ENCODE measurements at regions of chr7 and their contacts with region 1.

Region 1: DNA sequence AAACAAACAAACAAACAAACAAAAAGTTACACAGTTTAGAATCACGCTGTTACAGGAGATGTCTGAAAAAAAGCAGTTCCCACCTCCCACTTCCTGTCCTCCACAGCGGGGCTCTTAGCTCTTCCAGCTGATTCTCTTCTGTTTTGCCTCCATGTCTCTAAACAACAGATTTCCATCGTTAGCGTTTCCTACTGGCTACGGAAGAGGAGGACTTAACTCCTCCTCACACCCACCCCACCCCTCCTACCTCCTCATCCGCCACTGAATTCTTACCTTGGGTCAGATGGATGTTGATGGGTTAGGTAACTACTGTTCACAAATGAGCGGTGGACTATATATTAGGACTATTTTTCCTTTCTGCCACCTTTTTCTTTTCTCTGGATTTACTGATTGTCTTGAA is 36.8 kb upstream of the NUB1 start:
- DNase-seq: no peak
- H3K4me3 ChIP-seq: no peak overlapping the region
- H3K27ac ChIP-seq: no peak overlapping the region
- H3K4me1 ChIP-seq: no peaks in the 10 kb centered on the region
- H3K27me3 ChIP-seq: peaks cover 0 to 3% of the 10 kb centered on the region in 2 donors
- CTCF ChIP-seq: no peak
- POLR2A ChIP-seq: no peak

Region 2: DNA sequence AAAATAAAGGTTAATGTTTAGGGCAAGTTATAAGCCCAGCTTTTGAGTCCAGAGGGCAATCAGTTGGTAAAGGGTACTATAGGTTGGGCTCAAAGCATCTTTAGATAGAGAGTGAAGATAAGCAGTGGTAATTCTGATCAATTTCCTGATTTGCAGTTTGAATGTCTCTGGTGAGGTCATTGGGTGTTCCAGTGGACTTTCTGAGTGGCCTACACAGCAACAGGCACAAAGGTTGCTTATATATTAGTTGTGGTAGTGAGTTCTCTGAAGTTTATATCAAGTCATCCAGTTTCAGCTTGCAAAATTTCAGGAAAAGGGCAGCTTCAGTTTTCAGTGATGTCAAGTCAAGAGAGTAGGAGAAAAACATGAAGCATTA is 538.5 kb before region 1 on chr7:
- intact Hi-C with region 1: no loop called
- DNase-seq: no peak
- H3K4me3 ChIP-seq: no peak overlapping the region
- H3K27ac ChIP-seq: no peak overlapping the region
- H3K4me1 ChIP-seq: no peaks in the 10 kb centered on the region
- H3K27me3 ChIP-seq: no peaks in the 10 kb centered on the region
- CTCF ChIP-seq: no peak
- POLR2A ChIP-seq: no peak

Region 3: GRCh38 chr7:151137076-151137675 is 167.7 kb before region 1 on chr7:
- intact Hi-C with region 1: loop called (anchors 10 kb)
- DNase-seq: peak in 1 of 2 donors; percentile 12
- H3K4me3 ChIP-seq: no peak overlapping the region
- H3K27ac ChIP-seq: no peak overlapping the region
- H3K4me1 ChIP-seq: no peaks in the 10 kb centered on the region
- H3K27me3 ChIP-seq: no peaks in the 10 kb centered on the region
- CTCF ChIP-seq: no peak
- POLR2A ChIP-seq: no peak

Region 4: DNA sequence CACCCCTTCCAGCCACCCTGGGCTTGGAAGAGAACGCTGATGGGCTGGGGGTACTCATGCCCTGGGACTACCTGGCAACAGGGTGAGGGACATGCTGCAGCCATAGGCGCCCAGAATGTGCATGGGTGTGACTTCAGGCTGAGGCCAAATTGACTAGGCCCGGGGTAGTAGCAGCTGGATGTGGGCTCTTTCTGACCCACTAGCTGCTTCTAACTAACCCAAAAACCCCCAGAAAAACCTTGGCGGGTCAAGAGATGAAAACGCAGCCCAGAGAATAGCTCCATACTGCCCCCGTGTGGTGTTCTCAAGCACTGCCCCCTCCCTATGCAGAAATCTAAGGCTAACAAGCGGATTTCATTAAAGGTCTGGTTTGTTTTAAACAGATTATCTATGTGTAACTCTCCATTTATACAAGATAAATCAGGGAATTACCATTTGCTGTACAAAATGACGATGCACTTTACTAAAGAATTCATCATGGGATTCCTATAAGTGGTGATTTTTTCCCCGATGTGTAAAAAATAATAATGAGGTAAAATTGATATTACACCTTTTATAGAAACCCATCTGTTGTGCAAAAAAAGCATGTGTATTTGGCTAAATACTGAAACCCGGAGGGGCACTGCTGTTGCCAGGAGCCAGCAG is 60.5 kb before region 1 on chr7:
- intact Hi-C with region 1: loop called (anchors 10 kb)
- DNase-seq: no peak
- H3K4me3 ChIP-seq: no peak overlapping the region
- H3K27ac ChIP-seq: no peak overlapping the region
- H3K4me1 ChIP-seq: peaks cover 0 to 22% of the 10 kb centered on the region in 2 donors
- H3K27me3 ChIP-seq: no peaks in the 10 kb centered on the region
- CTCF ChIP-seq: peak; percentile 54 to 80 (median 58)
- POLR2A ChIP-seq: no peak

Measured in uterus (tissue), 4 donors.